IMR-90 (cell line): ENCODE measurements at regions of chr3 and their contacts with region 1.

Region 1: DNA sequence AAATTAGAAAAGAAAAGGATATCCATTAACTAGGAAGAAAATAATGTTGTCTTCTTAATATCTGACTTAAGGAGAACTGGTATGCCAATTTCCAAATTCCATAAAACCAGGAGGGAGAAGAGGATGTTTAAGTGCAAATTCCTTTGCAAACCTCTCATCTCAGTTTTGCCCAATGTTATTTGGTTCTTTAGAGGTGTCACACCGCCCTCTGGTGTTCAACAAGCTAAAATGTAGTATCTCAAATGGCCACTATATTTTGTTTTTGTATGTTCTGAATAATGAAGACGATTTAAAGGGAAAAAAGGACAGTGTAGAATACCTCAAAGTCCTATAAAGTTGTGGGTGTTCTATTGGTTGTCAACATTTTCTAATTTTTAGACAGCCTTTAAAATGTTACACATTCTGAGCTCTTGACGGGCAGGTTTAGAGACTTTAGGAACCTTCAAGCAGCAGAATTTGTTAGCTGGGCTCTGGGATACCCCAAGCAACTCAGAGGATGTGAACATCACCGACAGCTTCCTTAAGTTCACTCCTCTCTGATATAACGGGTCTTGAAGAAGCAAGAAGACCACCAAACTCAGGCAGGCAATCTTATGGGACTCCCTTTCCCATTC is 458.3 kb downstream of the MFSD1 start:
- DNase-seq: peak; percentile 77
- ATAC-seq: peak; percentile 76
- H3K4me3 ChIP-seq: no peak overlapping the region
- H3K27ac ChIP-seq: no peak overlapping the region
- H3K4me1 ChIP-seq: no peaks in the 10 kb centered on the region
- H3K27me3 ChIP-seq: peaks cover 11% of the 10 kb centered on the region
- CTCF ChIP-seq: peak; percentile 86
- POLR2A ChIP-seq: no peak
- RAD21 ChIP-seq: peak; percentile 73

Region 2: DNA sequence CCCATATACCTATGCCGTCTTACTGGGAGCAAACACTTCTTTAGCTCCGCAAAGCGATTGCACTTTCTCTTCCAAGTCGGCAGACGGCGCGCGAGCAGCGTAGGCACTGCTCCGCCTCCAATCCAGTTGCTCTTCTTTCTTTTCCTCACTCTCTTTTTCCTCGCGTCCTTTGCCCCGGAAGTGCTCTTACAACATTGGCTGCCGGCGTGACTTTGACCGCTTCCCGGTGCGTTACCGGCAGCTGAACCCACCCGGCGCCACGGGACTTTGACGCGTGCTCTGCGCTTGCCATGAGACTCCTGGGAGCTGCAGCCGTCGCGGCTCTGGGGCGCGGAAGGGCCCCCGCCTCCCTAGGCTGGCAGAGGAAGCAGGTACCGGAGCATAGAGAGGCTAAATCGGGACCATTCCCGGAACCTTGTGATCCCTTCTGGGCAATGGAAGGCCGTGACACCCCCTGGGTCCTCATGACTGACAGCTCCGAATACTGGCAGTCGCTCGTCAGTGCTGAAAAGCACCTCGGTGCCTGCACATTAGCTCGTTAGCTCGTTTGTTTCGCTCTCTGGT is 615.7 kb before region 1 on chr3 and contains the start of gene GFM1:
- CTCF ChIA-PET with region 1: no interaction called
- POLR2A ChIA-PET with region 1: no interaction called
- dilution Hi-C with region 1: no loop called
- in situ Hi-C with region 1: loop called (anchors 25 kb)
- intact Hi-C with region 1: no loop called
- DNase-seq: peak; percentile 94
- ATAC-seq: peak; percentile 99
- H3K4me3 ChIP-seq: peak within 1 kb of the TSS; percentile 81
- H3K27ac ChIP-seq: peak within 1 kb of the TSS; percentile 56
- H3K4me1 ChIP-seq: no peaks in the 10 kb centered on the region
- H3K27me3 ChIP-seq: no peaks in the 10 kb centered on the region
- CTCF ChIP-seq: peak; percentile 96
- POLR2A ChIP-seq: peak; percentile 80; the same call in 1 of the 2 replicates
- RAD21 ChIP-seq: peak; percentile 61
- total RNA-seq, gene GFM1: 36.0 and 55.0 TPM in 2 replicates

Region 3: DNA sequence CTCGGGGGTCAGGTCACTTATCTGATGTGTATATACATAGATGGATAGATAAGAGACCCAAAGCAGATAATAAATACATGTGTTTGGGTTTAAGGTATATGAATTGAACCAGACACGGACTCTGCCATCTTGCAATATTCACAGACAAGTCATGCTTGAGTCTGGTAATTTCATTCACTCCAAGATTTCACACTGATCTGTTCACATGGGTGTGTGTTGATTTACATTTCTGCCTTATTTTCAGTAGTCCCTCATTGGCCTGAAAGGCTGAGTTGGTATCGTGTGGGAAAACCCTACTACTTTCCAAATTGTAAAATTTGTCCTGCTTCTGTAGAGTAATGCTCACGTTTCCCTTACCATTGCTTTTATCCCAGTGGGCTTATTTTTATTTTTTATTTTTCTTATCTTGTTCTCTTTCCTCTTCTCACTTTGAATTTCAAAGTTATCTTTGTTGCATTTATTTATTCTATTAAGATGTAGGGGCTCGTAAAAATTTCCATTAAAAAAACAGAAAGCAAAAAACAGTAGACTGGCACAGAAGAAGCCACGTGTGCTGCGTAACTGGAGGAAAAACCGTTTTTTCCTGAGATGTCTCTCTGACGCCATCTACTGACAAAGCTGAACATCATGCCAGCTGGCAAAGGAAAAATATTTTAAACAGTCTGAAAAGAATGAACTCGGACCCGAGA is 469.1 kb before region 1 on chr3:
- CTCF ChIA-PET with region 1: interaction called, 4 read pairs
- POLR2A ChIA-PET with region 1: no interaction called
- dilution Hi-C with region 1: no loop called
- in situ Hi-C with region 1: no loop called
- intact Hi-C with region 1: loop called (anchors 5 kb)
- DNase-seq: peak; percentile 86
- ATAC-seq: peak; percentile 36; the same call in 1 of the 2 replicates
- H3K4me3 ChIP-seq: no peak overlapping the region
- H3K27ac ChIP-seq: no peak overlapping the region
- H3K4me1 ChIP-seq: peaks cover 6% of the 10 kb centered on the region
- H3K27me3 ChIP-seq: no peaks in the 10 kb centered on the region
- CTCF ChIP-seq: peak; percentile 95
- POLR2A ChIP-seq: no peak
- RAD21 ChIP-seq: peak; percentile 89

Region 4: DNA sequence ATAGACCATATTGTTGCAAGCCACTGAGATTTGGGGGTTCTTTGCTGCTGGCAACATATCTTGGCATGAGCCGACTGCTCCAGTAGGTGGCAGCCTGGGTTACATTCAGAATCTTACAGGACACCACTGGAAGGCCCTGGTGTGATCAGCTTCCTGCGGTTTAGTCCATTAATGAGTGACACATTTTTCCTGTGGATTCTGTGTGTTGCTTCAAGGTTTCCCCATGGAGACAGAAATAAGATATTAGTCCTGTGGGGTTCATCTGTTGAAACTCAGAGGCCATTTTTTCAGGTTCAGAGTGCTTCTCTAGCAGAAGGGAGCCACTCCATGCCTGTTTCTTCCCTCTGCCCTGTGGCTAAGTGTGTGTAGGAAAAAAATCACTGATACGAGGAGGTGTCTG is 342.1 kb before region 1 on chr3:
- CTCF ChIA-PET with region 1: interaction called, 9 read pairs
- POLR2A ChIA-PET with region 1: no interaction called
- dilution Hi-C with region 1: no loop called
- in situ Hi-C with region 1: no loop called
- intact Hi-C with region 1: loop called (anchors 1 kb)
- DNase-seq: peak; percentile 29
- ATAC-seq: peak; percentile 88
- H3K4me3 ChIP-seq: no peak overlapping the region
- H3K27ac ChIP-seq: no peak overlapping the region
- H3K4me1 ChIP-seq: no peaks in the 10 kb centered on the region
- H3K27me3 ChIP-seq: no peaks in the 10 kb centered on the region
- CTCF ChIP-seq: peak; percentile 48
- POLR2A ChIP-seq: no peak
- RAD21 ChIP-seq: peak; percentile 51

Region 5: DNA sequence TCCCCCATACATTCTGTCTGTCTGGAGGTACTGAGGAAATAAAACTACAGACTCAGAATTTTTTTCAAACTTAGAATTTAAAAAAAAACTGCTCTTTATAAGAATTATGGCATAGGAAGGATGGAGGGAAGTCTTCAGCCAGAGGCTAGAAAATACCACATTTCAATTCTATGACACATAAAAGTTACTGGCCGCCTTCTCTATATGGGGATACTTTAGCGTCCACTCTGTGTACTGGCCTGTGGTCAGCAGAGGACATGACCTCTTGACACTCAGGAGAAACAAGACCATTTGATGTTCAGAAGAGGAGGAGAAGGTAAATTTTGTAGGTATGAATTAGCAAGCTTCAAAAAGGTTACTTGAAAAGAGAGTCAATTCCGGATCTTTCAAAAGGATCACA is 40.9 kb before region 1 on chr3:
- CTCF ChIA-PET with region 1: no interaction called
- POLR2A ChIA-PET with region 1: no interaction called
- dilution Hi-C with region 1: no loop called
- in situ Hi-C with region 1: no loop called
- intact Hi-C with region 1: no loop called
- DNase-seq: no peak
- ATAC-seq: no peak
- H3K4me3 ChIP-seq: no peak overlapping the region
- H3K27ac ChIP-seq: no peak overlapping the region
- H3K4me1 ChIP-seq: no peaks in the 10 kb centered on the region
- H3K27me3 ChIP-seq: no peaks in the 10 kb centered on the region
- CTCF ChIP-seq: no peak
- POLR2A ChIP-seq: no peak
- RAD21 ChIP-seq: no peak

Region 6: DNA sequence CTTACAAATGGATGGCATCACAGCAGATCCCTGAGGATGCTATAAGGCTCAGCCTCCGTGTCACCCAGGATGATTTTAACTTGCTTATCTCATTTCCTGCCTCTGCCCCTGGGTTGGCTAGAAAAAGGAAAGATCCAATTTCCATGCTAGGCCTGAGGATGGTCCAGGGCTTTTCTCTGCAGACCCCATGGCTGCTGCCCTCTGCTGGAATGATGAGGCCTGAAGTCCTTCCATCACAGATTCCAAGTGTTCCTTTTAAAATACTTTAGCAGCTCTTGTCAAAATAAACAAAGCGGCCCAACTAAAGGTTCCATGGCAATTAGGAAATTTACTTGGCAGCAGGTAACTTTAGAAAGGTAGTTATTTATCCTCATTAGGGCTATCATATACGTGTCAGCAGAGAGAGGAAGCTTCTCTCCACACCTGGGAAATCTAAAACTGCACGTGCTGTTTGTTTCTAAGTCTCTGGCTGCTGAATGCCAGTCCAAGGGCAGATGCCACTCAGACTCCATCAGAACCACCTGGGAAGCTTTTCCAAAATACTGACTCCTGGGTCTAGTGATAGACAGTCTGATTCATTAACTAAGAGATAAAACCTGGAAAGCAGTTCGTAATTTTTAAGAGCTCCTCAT is 326.5 kb after region 1 on chr3:
- CTCF ChIA-PET with region 1: interaction called, 8 read pairs
- POLR2A ChIA-PET with region 1: no interaction called
- dilution Hi-C with region 1: no loop called
- in situ Hi-C with region 1: no loop called
- intact Hi-C with region 1: loop called (anchors 1 kb)
- DNase-seq: peak; percentile 63
- ATAC-seq: peak; percentile 91
- H3K4me3 ChIP-seq: no peak overlapping the region
- H3K27ac ChIP-seq: no peak overlapping the region
- H3K4me1 ChIP-seq: peaks cover 2% of the 10 kb centered on the region; the same call in 1 of the 2 replicates
- H3K27me3 ChIP-seq: peaks cover 4% of the 10 kb centered on the region
- CTCF ChIP-seq: peak; percentile 63
- POLR2A ChIP-seq: no peak
- RAD21 ChIP-seq: peak; percentile 75

Region 7: GRCh38 chr3:159672728-159673688 is 412.9 kb after region 1 on chr3:
- CTCF ChIA-PET with region 1: no interaction called
- POLR2A ChIA-PET with region 1: no interaction called
- dilution Hi-C with region 1: no loop called
- in situ Hi-C with region 1: no loop called
- intact Hi-C with region 1: no loop called
- DNase-seq: no peak
- ATAC-seq: no peak
- H3K4me3 ChIP-seq: no peak overlapping the region
- H3K27ac ChIP-seq: no peak overlapping the region
- H3K4me1 ChIP-seq: peaks cover 5% of the 10 kb centered on the region
- H3K27me3 ChIP-seq: no peaks in the 10 kb centered on the region
- CTCF ChIP-seq: no peak
- POLR2A ChIP-seq: no peak
- RAD21 ChIP-seq: no peak

Region 8: GRCh38 chr3:160003520-160004128 is 743.5 kb after region 1 on chr3:
- CTCF ChIA-PET with region 1: no interaction called
- POLR2A ChIA-PET with region 1: no interaction called
- dilution Hi-C with region 1: no loop called
- in situ Hi-C with region 1: loop called (anchors 25 kb)
- intact Hi-C with region 1: loop called (anchors 1 kb)
- DNase-seq: peak; percentile 31
- ATAC-seq: peak; percentile 64
- H3K4me3 ChIP-seq: no peak overlapping the region
- H3K27ac ChIP-seq: no peak overlapping the region
- H3K4me1 ChIP-seq: 0 out of 2 replicates have a peak, but pooled peaks cover 1% of the 10 kb centered on the region
- H3K27me3 ChIP-seq: no peaks in the 10 kb centered on the region
- CTCF ChIP-seq: peak; percentile 51
- POLR2A ChIP-seq: no peak
- RAD21 ChIP-seq: peak; percentile 59

Region 9: DNA sequence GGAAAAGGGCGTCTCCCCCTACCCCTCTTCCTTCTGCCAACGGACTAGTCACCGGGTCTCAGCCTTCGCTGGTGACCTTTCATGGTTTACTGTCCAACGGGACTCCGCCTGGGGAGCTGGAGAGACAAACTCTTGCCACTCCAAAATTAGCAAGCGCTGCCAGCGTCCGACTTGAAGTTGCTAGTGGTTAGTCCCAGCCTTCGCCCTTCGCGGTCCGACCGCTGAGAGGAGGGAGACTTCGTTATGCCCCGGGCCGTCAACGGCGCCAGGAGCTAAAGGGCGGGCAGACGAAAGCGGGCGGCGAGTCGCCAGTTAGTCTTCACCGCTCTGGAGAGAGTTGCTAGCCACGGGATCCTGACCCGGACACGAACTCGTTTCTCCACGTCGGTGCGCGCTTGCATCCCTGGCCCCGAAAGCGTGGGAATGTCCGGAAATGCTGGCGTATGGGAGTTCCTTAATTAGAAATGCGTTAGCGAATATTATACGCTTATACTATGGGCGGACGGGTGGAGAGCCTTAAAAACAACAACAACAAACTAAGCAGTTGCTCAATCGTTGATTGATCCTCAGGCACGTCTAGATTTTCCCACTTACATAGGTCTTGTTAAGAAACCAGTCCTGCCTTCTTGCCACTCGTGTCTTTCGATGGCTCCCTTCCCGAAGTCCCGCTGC is 1140.0 kb after region 1 on chr3:
- CTCF ChIA-PET with region 1: no interaction called
- POLR2A ChIA-PET with region 1: no interaction called
- dilution Hi-C with region 1: no loop called
- in situ Hi-C with region 1: no loop called
- intact Hi-C with region 1: no loop called
- DNase-seq: peak; percentile 49
- ATAC-seq: peak; percentile 4; the same call in 1 of the 2 replicates
- H3K4me3 ChIP-seq: peak overlapping the region; percentile 60
- H3K27ac ChIP-seq: peak overlapping the region; percentile 88
- H3K4me1 ChIP-seq: peaks cover 3% of the 10 kb centered on the region; the same call in 1 of the 2 replicates
- H3K27me3 ChIP-seq: no peaks in the 10 kb centered on the region
- CTCF ChIP-seq: no peak
- POLR2A ChIP-seq: no peak
- RAD21 ChIP-seq: no peak